ENCODE measurements at regions of chr16 and their contacts with region 1.

Region 1: GRCh38 chr16:65793781-65794180 is 572.7 kb upstream of the CDH5 start:
- DNase-seq: no peak
- ATAC-seq: no peak
- H3K4me3 ChIP-seq: no peak overlapping the region
- H3K27ac ChIP-seq: no peak overlapping the region
- H3K4me1 ChIP-seq: no peaks in the 10 kb centered on the region; the same call in 1 of the 2 replicates
- H3K27me3 ChIP-seq: peaks cover 29% of the 10 kb centered on the region
- CTCF ChIP-seq: no peak
- POLR2A ChIP-seq: no peak
- RAD21 ChIP-seq: no peak

Region 2: GRCh38 chr16:65429494-65430181 is 364.1 kb before region 1 on chr16:
- CTCF ChIA-PET with region 1: no interaction called
- POLR2A ChIA-PET with region 1: no interaction called
- dilution Hi-C with region 1: no loop called
- in situ Hi-C with region 1: no loop called
- intact Hi-C with region 1: no loop called
- DNase-seq: no peak
- ATAC-seq: no peak
- H3K4me3 ChIP-seq: no peak overlapping the region
- H3K27ac ChIP-seq: no peak overlapping the region
- H3K4me1 ChIP-seq: no peaks in the 10 kb centered on the region
- H3K27me3 ChIP-seq: peaks cover 10% of the 10 kb centered on the region
- CTCF ChIP-seq: no peak
- POLR2A ChIP-seq: no peak
- RAD21 ChIP-seq: no peak

Region 3: DNA sequence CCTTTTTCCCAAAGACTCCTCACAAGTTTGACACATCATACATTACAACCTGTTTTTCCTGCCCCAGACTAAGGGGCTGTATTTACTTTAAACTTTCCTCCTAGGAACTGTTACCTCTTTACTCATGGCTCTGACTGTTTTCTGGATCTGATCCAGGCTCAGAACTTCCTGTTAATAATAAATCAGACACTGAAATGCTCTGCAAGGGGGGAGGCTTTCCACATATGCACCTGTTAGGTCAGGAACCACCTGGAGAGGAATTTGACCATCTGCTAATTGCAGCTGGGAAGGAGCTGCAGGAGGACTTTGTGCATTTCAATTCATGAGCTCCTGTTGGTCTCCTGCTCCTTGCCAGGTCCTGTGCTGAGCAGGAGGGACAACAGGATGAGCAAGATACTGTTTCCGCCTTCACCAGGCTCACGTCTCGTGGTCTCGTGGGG is 95.8 kb after region 1 on chr16:
- CTCF ChIA-PET with region 1: interaction called, 11 read pairs
- POLR2A ChIA-PET with region 1: no interaction called
- dilution Hi-C with region 1: no loop called
- in situ Hi-C with region 1: no loop called
- intact Hi-C with region 1: no loop called
- DNase-seq: peak; percentile 7
- ATAC-seq: no peak
- H3K4me3 ChIP-seq: no peak overlapping the region
- H3K27ac ChIP-seq: no peak overlapping the region
- H3K4me1 ChIP-seq: no peaks in the 10 kb centered on the region
- H3K27me3 ChIP-seq: peaks cover 4% of the 10 kb centered on the region; the same call in 1 of the 2 replicates
- CTCF ChIP-seq: no peak
- POLR2A ChIP-seq: no peak
- RAD21 ChIP-seq: no peak

Region 4: DNA sequence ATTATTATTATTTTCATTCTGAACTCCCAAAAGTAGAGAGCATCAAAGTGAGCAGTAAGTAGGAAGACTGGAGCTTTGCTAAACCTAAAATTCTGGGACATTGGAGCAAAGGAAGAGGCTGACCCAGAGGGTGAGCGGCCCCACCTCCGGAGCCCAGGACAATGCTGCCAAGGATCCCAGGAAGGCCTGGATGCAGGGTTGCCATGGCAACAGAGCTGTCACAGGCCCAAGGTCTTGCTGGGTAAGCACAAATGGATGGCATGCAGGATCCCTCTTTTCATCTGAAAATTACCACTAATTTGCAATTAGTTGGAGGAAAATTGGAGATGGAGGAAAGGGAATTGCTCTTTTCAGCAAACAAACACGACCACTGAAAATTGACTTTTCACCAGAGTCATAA is 114.8 kb after region 1 on chr16:
- CTCF ChIA-PET with region 1: no interaction called
- POLR2A ChIA-PET with region 1: no interaction called
- dilution Hi-C with region 1: no loop called
- in situ Hi-C with region 1: no loop called
- intact Hi-C with region 1: no loop called
- DNase-seq: no peak
- ATAC-seq: no peak
- H3K4me3 ChIP-seq: no peak overlapping the region
- H3K27ac ChIP-seq: no peak overlapping the region
- H3K4me1 ChIP-seq: no peaks in the 10 kb centered on the region
- H3K27me3 ChIP-seq: peaks cover 21% of the 10 kb centered on the region
- CTCF ChIP-seq: no peak
- POLR2A ChIP-seq: no peak
- RAD21 ChIP-seq: no peak

Region 5: GRCh38 chr16:65919145-65919985 is 125.6 kb after region 1 on chr16:
- CTCF ChIA-PET with region 1: no interaction called
- POLR2A ChIA-PET with region 1: no interaction called
- dilution Hi-C with region 1: no loop called
- in situ Hi-C with region 1: no loop called
- intact Hi-C with region 1: no loop called
- DNase-seq: no peak
- ATAC-seq: no peak
- H3K4me3 ChIP-seq: no peak overlapping the region
- H3K27ac ChIP-seq: no peak overlapping the region
- H3K4me1 ChIP-seq: no peaks in the 10 kb centered on the region
- H3K27me3 ChIP-seq: peaks cover 28% of the 10 kb centered on the region
- CTCF ChIP-seq: no peak
- POLR2A ChIP-seq: no peak
- RAD21 ChIP-seq: no peak

Region 6: DNA sequence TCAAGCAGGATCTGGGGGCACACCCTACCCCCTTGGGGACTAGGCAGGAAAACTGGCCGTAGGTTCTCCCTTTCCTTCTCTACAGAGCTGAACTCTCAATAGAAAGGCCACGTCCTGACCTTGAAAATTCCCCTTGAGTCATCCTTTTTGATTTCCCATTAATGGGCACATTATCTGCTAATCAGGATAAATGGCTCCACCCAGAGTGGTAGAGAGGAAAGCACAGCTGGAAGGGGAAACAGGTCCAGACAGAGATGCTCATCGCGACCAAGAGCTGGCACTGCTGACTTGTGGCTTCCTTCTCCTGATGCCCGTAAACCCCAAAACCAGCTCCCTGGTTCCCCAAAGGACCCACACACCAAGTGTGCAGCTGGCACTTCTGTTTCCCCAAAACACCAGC is 366.2 kb after region 1 on chr16:
- CTCF ChIA-PET with region 1: no interaction called
- POLR2A ChIA-PET with region 1: interaction called, 24 read pairs
- dilution Hi-C with region 1: no loop called
- in situ Hi-C with region 1: no loop called
- intact Hi-C with region 1: no loop called
- DNase-seq: peak; percentile 30
- ATAC-seq: no peak
- H3K4me3 ChIP-seq: no peak overlapping the region
- H3K27ac ChIP-seq: no peak overlapping the region
- H3K4me1 ChIP-seq: no peaks in the 10 kb centered on the region
- H3K27me3 ChIP-seq: peaks cover 8% of the 10 kb centered on the region
- CTCF ChIP-seq: peak; percentile 41; the same call in 1 of the 2 replicates
- POLR2A ChIP-seq: no peak
- RAD21 ChIP-seq: peak; percentile 48

Measured in IMR-90 (cell line).